PC-3 (cell line): ENCODE measurements at regions of chr1 and their contacts with region 1.

Region 1: DNA sequence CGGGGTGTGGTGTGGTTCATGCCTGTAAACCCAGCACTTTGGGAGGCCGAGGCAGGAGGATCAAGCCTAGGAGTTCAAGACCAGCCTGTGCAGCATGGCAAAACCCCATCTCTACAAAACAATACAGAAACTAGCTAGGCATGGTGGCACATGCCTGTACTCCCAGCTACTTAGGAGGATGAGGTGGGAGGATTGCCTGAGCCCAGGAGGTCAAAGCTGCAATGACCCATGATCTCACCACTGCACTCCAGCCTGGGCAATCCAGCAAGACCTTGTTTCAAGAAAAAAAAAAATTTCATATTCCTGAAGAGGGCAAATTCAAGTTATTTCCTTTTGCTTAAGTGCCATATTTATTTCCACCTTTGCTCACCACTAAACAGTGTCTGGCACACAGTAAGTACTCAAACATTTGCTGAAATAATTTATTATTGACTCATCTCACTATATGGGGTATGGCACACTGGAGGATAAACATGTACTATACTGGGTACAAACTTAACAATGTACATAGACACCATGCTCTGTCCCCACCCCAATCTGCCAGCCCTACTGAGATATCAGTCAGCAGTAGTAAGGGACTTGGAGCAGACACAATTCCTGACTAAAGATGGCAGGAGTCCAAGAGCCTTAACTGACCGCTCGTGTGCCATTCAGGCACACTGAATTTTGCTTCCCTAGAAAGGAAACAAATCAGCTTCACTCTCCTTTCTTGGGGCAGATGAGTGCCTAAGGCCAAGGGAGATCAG is 15.5 kb downstream of the MEAF6 start:
- DNase-seq: peak; percentile 98
- ATAC-seq: peak; percentile 93
- H3K4me3 ChIP-seq: peak overlapping the region; percentile 33; the same call in 1 of the 2 replicates
- H3K27ac ChIP-seq: peak overlapping the region; percentile 68
- H3K4me1 ChIP-seq: peaks cover 55% of the 10 kb centered on the region
- H3K27me3 ChIP-seq: no peaks in the 10 kb centered on the region
- CTCF ChIP-seq: no peak

Region 2: GRCh38 chr1:37354876-37355650 is 144.0 kb before region 1 on chr1:
- CTCF ChIA-PET with region 1: no interaction called
- POLR2A ChIA-PET with region 1: no interaction called
- intact Hi-C with region 1: no loop called
- DNase-seq: no peak
- ATAC-seq: no peak
- H3K4me3 ChIP-seq: no peak overlapping the region
- H3K27ac ChIP-seq: no peak overlapping the region
- H3K4me1 ChIP-seq: no peaks in the 10 kb centered on the region
- H3K27me3 ChIP-seq: peaks cover 47% of the 10 kb centered on the region
- CTCF ChIP-seq: no peak

Region 3: DNA sequence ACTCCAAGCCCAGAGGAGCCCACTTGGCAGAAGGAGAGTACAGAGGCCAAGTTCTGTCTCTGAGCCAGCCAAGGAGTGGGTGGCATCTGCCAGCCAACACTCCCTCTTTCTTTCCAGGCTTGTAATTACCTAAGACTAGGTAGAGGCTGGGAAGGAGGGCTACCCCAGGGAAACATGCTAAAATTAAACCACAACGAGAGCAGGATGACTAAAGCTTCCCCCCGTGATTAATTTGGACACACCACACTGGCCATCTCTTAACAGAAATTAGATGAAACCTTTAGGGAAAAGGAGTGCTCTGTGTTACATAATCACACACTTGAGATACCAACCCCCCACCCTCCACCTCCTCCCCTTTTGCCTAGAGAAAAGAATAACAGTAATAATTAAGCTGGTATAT is 126.7 kb before region 1 on chr1:
- CTCF ChIA-PET with region 1: no interaction called
- POLR2A ChIA-PET with region 1: no interaction called
- intact Hi-C with region 1: no loop called
- DNase-seq: no peak
- ATAC-seq: no peak
- H3K4me3 ChIP-seq: no peak overlapping the region
- H3K27ac ChIP-seq: no peak overlapping the region
- H3K4me1 ChIP-seq: no peaks in the 10 kb centered on the region
- H3K27me3 ChIP-seq: peaks cover 23% of the 10 kb centered on the region
- CTCF ChIP-seq: no peak

Region 4: DNA sequence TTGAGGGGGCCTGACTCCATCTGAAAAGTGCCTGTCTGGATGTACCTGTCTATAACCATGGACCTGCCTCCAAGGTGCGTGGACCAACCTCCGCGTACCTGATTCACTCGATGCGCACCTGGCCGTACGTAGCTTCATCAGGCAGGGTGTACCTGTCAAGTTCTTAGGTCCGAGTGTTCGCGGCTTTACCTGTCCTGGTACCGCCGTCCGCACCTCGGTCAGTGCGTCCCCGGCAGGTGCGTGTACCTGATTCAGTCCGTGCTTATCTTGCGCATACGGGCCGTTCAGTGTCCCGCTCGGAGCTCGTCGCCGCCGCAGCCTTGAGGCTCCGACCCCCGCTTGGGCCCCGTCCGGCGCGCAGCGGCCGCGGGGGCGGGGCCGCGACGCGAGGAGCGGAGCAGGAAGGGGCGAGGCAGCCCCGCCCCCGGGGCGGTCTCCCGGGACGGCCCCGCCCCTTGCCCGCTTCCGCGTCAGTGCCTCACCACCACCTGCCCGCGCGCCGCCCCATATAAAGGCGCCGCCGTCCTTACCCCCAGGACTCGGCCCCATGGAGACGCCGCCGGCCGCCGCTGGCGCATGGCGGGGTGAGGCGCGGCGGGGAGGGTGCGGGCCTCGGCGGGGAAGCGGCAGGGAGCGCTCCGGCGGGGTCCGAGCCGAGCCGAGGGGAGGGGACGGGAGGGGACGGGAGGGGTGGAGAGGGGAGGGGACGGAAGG is 24.8 kb before region 1 on chr1 and contains the start of gene ZC3H12A:
- CTCF ChIA-PET with region 1: no interaction called
- POLR2A ChIA-PET with region 1: interaction called, 12 read pairs
- intact Hi-C with region 1: loop called (anchors 1 kb)
- DNase-seq: peak; percentile 95
- ATAC-seq: peak; percentile 30
- H3K4me3 ChIP-seq: peak within 1 kb of the TSS; percentile 71
- H3K27ac ChIP-seq: peak within 1 kb of the TSS; percentile 97
- H3K4me1 ChIP-seq: peaks cover 56% of the 10 kb centered on the region
- H3K27me3 ChIP-seq: no peaks in the 10 kb centered on the region
- CTCF ChIP-seq: no peak
- total RNA-seq, gene ZC3H12A: 45.3 and 65.1 TPM in 2 replicates

Region 5: DNA sequence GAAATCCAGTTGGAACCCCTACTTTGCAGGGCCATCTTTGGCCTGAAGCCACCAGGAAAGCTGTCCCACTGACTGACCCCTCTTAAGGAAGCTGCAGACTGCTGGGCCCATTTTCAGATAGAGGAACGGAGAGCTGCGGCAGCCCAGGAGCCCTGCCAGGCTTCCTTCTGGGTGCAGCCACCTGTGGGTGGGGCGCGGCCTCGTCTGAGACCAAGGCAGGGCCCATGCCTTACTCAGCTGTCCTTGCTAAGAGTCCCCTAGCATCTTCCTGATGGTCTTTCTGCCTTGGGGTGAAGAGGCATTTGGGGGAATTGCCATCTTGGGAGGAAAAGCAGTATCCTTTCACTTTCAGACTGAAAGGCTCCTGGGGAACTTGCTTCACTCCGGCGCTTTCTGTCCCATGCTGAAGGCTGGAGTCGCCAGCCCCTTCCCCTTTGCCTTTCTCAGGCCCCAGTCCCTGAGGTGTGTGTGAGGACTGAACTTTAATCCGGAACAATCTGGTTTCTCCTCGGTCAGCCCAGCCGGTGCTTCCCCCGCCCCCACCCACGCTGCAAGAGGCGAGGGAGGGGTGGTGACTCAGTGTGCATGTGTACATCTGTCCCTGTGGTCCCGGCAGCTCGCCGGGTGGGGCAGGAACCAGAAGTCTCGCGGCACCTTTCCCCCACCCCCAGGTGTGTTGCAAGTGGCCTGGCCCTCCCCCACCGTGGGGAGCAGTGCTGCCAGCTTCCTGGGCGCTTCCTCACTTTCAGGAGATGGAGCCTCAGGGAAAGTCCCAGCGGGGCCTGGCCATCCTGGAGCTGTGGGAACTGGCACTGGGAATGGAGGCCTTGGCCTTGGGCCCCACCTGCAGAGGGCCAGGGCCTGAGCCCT is 19.6 kb before region 1 on chr1:
- CTCF ChIA-PET with region 1: interaction called, 3 read pairs
- POLR2A ChIA-PET with region 1: interaction called, 12 read pairs
- intact Hi-C with region 1: loop called (anchors 1 kb)
- DNase-seq: peak; percentile 98
- ATAC-seq: peak; percentile 42
- H3K4me3 ChIP-seq: peak overlapping the region; percentile 71
- H3K27ac ChIP-seq: peak overlapping the region; percentile 97
- H3K4me1 ChIP-seq: peaks cover 58% of the 10 kb centered on the region
- H3K27me3 ChIP-seq: no peaks in the 10 kb centered on the region
- CTCF ChIP-seq: no peak

Region 6: GRCh38 chr1:37514350-37515184 is 15.5 kb after region 1 on chr1 and contains the start of gene MEAF6:
- CTCF ChIA-PET with region 1: interaction called, 7 read pairs
- POLR2A ChIA-PET with region 1: interaction called, 25 read pairs
- intact Hi-C with region 1: loop called (anchors 1 kb)
- DNase-seq: peak; percentile 88
- ATAC-seq: peak; percentile 94
- H3K4me3 ChIP-seq: peak within 1 kb of the TSS; percentile 79
- H3K27ac ChIP-seq: peak within 1 kb of the TSS; percentile 76
- H3K4me1 ChIP-seq: peaks cover 19% of the 10 kb centered on the region
- H3K27me3 ChIP-seq: no peaks in the 10 kb centered on the region
- CTCF ChIP-seq: peak; percentile 71
- total RNA-seq, gene MEAF6: 87.0 and 90.9 TPM in 2 replicates

Region 7: DNA sequence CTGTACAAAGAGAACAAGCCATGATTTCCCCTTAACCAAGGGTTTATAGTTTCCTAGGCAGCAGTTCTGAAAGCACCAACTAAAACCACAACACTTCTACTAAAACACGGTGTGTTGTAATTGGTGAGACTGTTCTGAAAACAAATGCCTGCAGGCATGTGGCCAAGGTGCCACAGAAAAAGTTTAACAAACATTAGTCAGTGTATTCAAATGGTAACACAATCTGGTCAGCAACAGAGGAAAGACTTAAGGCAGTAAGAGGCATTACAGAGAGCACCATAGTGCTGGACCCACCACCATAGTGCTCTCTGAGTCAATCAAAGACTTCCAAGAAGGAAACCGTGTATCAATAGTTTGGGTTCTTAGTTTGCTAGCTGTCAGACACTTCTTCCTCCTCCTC is 38.3 kb after region 1 on chr1:
- CTCF ChIA-PET with region 1: no interaction called
- POLR2A ChIA-PET with region 1: no interaction called
- intact Hi-C with region 1: loop called (anchors 1 kb)
- DNase-seq: peak; percentile 94
- ATAC-seq: peak; percentile 80
- H3K4me3 ChIP-seq: no peak overlapping the region
- H3K27ac ChIP-seq: peak overlapping the region; percentile 56
- H3K4me1 ChIP-seq: peaks cover 46% of the 10 kb centered on the region
- H3K27me3 ChIP-seq: no peaks in the 10 kb centered on the region
- CTCF ChIP-seq: no peak

Region 8: GRCh38 chr1:37553927-37554808 is 55.1 kb after region 1 on chr1 and contains the start of gene SNIP1:
- CTCF ChIA-PET with region 1: interaction called, 10 read pairs
- POLR2A ChIA-PET with region 1: no interaction called
- intact Hi-C with region 1: no loop called
- DNase-seq: peak; percentile 94
- ATAC-seq: peak; percentile 93
- H3K4me3 ChIP-seq: peak within 1 kb of the TSS; percentile 100
- H3K27ac ChIP-seq: peak within 1 kb of the TSS; percentile 59
- H3K4me1 ChIP-seq: peaks cover 20% of the 10 kb centered on the region
- H3K27me3 ChIP-seq: no peaks in the 10 kb centered on the region
- CTCF ChIP-seq: no peak
- total RNA-seq, gene SNIP1: 23.1 and 36.0 TPM in 2 replicates

Region 9: DNA sequence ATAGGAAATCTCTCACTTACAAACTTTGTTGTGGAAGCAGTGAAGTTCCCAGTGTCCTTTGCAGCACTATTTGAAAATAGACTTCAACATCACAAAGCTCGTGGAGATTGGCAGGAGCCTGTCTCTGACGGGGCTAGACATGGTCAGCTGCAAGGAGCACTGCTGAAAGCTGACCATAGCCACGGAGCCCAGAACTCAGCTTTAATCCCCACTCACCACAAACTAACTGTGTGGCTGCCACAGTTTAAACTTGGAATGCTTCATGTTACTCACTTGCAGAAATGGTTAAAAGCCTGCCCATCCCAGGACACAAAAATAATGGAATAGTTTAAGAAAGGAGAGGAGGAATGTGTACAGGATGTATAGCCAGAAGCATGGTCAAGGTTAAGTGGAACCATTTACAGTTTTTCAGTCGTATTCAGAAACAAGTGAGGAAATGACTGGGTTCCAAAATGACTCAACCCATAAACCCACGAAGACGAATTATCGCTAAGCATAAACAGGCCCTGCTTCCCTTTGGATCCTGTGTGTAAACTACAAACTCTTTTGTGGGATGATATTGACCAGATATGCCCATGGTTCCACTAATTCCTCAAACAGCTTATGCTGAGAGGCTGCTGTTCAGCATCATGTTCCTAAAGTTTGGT is 75.9 kb after region 1 on chr1:
- CTCF ChIA-PET with region 1: no interaction called
- POLR2A ChIA-PET with region 1: no interaction called
- intact Hi-C with region 1: loop called (anchors 1 kb)
- DNase-seq: peak; percentile 90
- ATAC-seq: peak; percentile 79
- H3K4me3 ChIP-seq: no peak overlapping the region
- H3K27ac ChIP-seq: peak overlapping the region; percentile 82
- H3K4me1 ChIP-seq: peaks cover 33% of the 10 kb centered on the region
- H3K27me3 ChIP-seq: no peaks in the 10 kb centered on the region
- CTCF ChIP-seq: no peak

Region 10: GRCh38 chr1:37723390-37724078 is 224.5 kb after region 1 on chr1:
- CTCF ChIA-PET with region 1: no interaction called
- POLR2A ChIA-PET with region 1: no interaction called
- intact Hi-C with region 1: no loop called
- DNase-seq: no peak
- ATAC-seq: no peak
- H3K4me3 ChIP-seq: no peak overlapping the region
- H3K27ac ChIP-seq: no peak overlapping the region
- H3K4me1 ChIP-seq: no peaks in the 10 kb centered on the region
- H3K27me3 ChIP-seq: no peaks in the 10 kb centered on the region
- CTCF ChIP-seq: no peak